Esophagus squamous epithelium (tissue), 5 donors: ENCODE measurements at regions of chr1 and their contacts with region 1.

Region 1: GRCh38 chr1:100459358-100460114 is 78.4 kb upstream of the GPR88 start:
- DNase-seq: peak; percentile 26
- H3K4me3 ChIP-seq: no peak overlapping the region
- H3K27ac ChIP-seq: peak overlapping the region in 1 of 4 donors; percentile 39
- H3K4me1 ChIP-seq: peaks cover 0 to 14% (median 3%) of the 10 kb centered on the region in 3 donors
- H3K27me3 ChIP-seq: no peaks in the 10 kb centered on the region
- CTCF ChIP-seq: peak; percentile 42 to 85 (median 82)
- POLR2A ChIP-seq: no peak

Region 2: GRCh38 chr1:100279954-100280682 is 179.4 kb before region 1 on chr1:
- intact Hi-C with region 1: loop called (anchors 10 kb)
- DNase-seq: no peak
- H3K4me3 ChIP-seq: no peak overlapping the region
- H3K27ac ChIP-seq: no peak overlapping the region
- H3K4me1 ChIP-seq: no peaks in the 10 kb centered on the region
- H3K27me3 ChIP-seq: no peaks in the 10 kb centered on the region
- CTCF ChIP-seq: no peak
- POLR2A ChIP-seq: no peak

Region 3: DNA sequence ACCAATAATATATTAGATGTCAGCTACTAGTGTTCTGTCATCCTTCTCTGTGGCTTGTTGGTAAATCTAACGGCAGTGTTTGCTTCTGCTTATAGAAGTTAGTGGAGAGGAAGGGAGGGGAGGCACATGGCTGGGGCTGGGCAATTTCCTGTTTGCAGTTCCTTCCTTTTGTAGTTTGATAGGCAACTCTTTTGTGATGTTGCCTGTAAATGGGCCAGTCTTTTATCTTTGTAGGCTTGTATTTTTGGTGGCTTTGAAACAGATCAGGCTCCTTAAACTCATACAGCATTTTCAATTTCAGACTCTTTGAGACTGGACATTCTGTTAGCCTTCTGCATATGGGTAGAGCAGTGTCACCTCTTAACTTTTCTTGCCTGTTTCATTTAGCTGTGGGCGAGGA is 59.1 kb before region 1 on chr1:
- intact Hi-C with region 1: no loop called
- DNase-seq: peak; percentile 8
- H3K4me3 ChIP-seq: no peak overlapping the region
- H3K27ac ChIP-seq: peak overlapping the region in 2 of 4 donors; percentile 19 to 49
- H3K4me1 ChIP-seq: peaks cover 0 to 6% (median 0%) of the 10 kb centered on the region in 3 donors
- H3K27me3 ChIP-seq: no peaks in the 10 kb centered on the region
- CTCF ChIP-seq: no peak
- POLR2A ChIP-seq: peak in 1 of 4 donors; percentile 44